ENCODE measurements at regions of chr7 and their contacts with region 1.

Region 1: GRCh38 chr7:157273208-157274093 is 63.4 kb upstream of the DNAJB6 start:
- DNase-seq: peak; percentile 82
- ATAC-seq: peak; percentile 94
- H3K4me3 Mint-ChIP-seq: no peak overlapping the region
- H3K27ac Mint-ChIP-seq: no peak overlapping the region
- H3K4me1 Mint-ChIP-seq: peaks cover 17% of the 10 kb centered on the region
- H3K27me3 Mint-ChIP-seq: peaks cover 5% of the 10 kb centered on the region
- CTCF ChIP-seq: peak; percentile 99

Region 2: GRCh38 chr7:157250605-157251228 is 22.7 kb before region 1 on chr7:
- CTCF ChIA-PET with region 1: interaction called, 15 read pairs
- POLR2A ChIA-PET with region 1: no interaction called
- intact Hi-C with region 1: no loop called
- DNase-seq: peak; percentile 66
- ATAC-seq: peak; percentile 74
- H3K4me3 Mint-ChIP-seq: no peak overlapping the region
- H3K27ac Mint-ChIP-seq: no peak overlapping the region
- H3K4me1 Mint-ChIP-seq: no peaks in the 10 kb centered on the region
- H3K27me3 Mint-ChIP-seq: no peaks in the 10 kb centered on the region
- CTCF ChIP-seq: peak; percentile 86

Region 3: GRCh38 chr7:157284229-157285014 is 11.0 kb after region 1 on chr7:
- CTCF ChIA-PET with region 1: interaction called, 16 read pairs
- POLR2A ChIA-PET with region 1: no interaction called
- intact Hi-C with region 1: no loop called
- DNase-seq: no peak
- ATAC-seq: no peak
- H3K4me3 Mint-ChIP-seq: no peak overlapping the region
- H3K27ac Mint-ChIP-seq: no peak overlapping the region
- H3K4me1 Mint-ChIP-seq: no peaks in the 10 kb centered on the region
- H3K27me3 Mint-ChIP-seq: peaks cover 5% of the 10 kb centered on the region
- CTCF ChIP-seq: no peak

Region 4: DNA sequence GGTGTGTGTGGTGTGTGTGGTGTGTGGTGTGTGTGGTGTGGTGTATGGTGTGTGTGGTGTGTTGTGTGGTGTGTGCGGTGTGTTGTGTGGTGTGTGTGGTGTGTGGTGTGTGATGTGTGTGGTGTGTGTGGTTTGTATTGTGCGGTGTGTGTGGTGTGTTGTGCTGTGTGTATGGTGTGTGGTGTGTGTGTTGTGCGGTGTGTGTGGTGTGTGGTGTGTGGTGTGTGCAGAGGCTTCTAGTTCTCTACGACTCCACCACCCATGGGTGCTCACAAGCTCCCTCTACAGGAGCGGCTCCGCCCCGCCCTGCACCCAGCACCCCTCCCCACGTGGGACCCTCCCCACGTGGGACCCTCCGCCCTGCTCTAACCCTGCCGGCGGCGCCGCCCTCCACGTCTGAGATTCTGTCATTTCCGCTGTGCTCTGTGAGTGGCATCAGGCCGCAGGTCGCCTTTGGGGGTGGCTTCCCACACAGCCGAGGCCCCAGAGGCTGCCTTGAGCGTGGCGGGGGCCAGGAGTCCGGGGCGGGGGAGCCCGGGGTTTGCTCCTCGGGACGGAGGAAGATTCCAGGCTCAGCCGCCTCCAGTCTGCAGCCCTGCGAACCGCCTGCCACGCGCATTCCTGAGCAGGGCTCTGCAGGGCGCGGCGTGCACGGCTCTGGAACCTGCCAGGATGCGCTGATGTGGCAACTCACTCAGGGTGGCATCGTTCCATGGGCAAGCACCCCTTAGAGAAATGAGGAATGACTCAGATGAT is 26.3 kb after region 1 on chr7:
- CTCF ChIA-PET with region 1: interaction called, 11 read pairs
- POLR2A ChIA-PET with region 1: no interaction called
- intact Hi-C with region 1: no loop called
- DNase-seq: peak; percentile 46
- ATAC-seq: peak; percentile 10
- H3K4me3 Mint-ChIP-seq: no peak overlapping the region
- H3K27ac Mint-ChIP-seq: peak overlapping the region; percentile 79
- H3K4me1 Mint-ChIP-seq: peaks cover 33% of the 10 kb centered on the region
- H3K27me3 Mint-ChIP-seq: peaks cover 5% of the 10 kb centered on the region
- CTCF ChIP-seq: no peak

Region 5: GRCh38 chr7:157404845-157405481 is 131.5 kb after region 1 on chr7:
- CTCF ChIA-PET with region 1: no interaction called
- POLR2A ChIA-PET with region 1: no interaction called
- intact Hi-C with region 1: no loop called
- DNase-seq: peak; percentile 62
- ATAC-seq: peak; percentile 57
- H3K4me3 Mint-ChIP-seq: no peak overlapping the region
- H3K27ac Mint-ChIP-seq: peak overlapping the region; percentile 77
- H3K4me1 Mint-ChIP-seq: peaks cover 14% of the 10 kb centered on the region
- H3K27me3 Mint-ChIP-seq: no peaks in the 10 kb centered on the region
- CTCF ChIP-seq: no peak